Psoas muscle (tissue), 8 donors: ENCODE measurements at regions of chr18 and their contacts with region 1.

Region 1: GRCh38 chr18:69265656-69266055 is 135.0 kb upstream of the DOK6 start:
- DNase-seq: no peak
- ATAC-seq: no peak
- H3K4me3 ChIP-seq: no peak overlapping the region
- H3K27ac ChIP-seq: no peak overlapping the region
- H3K4me1 ChIP-seq: no peaks in the 10 kb centered on the region
- H3K27me3 ChIP-seq: no peaks in the 10 kb centered on the region
- CTCF ChIP-seq: no peak

Region 2: DNA sequence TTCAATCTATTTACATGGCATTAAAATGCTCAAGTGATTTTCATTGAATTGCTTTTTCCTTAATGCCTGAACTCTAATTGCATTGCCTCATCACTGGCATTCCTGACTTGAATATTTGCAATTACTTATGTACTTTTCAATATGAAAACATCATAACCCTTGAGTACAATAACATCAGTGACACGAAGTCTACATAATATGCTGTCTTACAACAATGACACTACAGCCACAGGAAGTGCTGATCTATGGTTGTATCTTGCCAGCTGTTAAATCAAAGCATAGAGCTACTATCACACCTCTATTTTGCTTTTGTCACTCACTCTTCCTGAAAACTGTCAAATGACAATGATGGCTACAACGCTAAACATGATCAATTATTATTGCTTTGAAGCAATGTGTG is 310.9 kb before region 1 on chr18:
- intact Hi-C with region 1: loop called in 1 of 2 experiments (anchors 10 kb)
- DNase-seq: no peak
- ATAC-seq: no peak
- H3K4me3 ChIP-seq: no peak overlapping the region
- H3K27ac ChIP-seq: no peak overlapping the region
- H3K4me1 ChIP-seq: no peaks in the 10 kb centered on the region
- H3K27me3 ChIP-seq: no peaks in the 10 kb centered on the region
- CTCF ChIP-seq: no peak